GM18951 (cell line): ENCODE measurements at regions of chr1 and their contacts with region 1.

Region 1: GRCh38 chr1:168637350-168637991 is 61.1 kb downstream of the XCL1 start:
- POLR2A ChIP-seq: no peak

Region 2: GRCh38 chr1:169106095-169106920 is 468.8 kb after region 1 on chr1 and contains the start of gene ATP1B1:
- in situ Hi-C with region 1: loop called (anchors 25 kb)
- POLR2A ChIP-seq: peak; percentile 99